Natural killer cell (primary cell): ENCODE measurements at regions of chr3 and their contacts with region 1.

Region 1: DNA sequence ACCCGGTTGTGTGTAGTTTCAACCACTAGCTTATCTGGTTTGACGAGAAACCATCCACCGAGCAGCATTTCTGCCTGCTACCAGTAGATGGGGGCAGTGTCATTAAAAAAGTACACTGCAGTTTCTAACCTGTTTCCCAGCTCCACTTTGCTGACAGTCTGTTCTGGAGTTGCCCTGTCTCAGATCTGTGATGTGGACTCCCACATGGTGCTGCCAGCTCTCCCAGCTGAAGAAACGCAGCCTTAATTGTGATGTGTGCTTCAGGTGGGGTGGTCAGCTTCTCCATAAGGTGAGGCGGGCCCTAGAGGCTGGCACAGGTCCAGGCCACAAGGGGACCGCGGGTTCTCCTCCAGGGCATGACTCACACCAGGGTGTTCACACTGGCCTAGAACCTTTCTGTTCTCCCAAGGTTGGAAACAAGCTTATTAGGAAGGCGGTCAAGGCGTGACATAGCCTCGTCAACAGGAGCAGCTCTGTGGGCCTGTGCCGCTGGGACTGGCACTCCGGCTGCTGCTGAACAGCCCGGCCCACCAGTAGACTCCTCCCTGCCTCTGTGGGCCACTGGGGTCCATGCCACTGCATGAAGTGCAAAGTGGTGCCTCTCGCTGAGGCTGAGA is 2.9 kb upstream of the FAM43A start:
- DNase-seq: peak; percentile 52 to 86
- ATAC-seq: peak; percentile 64 to 79 (median 64)
- H3K4me3 ChIP-seq: no peak overlapping the region
- H3K4me3 Mint-ChIP-seq: no peak overlapping the region
- H3K27ac ChIP-seq: no peak overlapping the region
- H3K27ac Mint-ChIP-seq: peak overlapping the region; percentile 57 to 73
- H3K4me1 ChIP-seq: peaks cover 29% of the 10 kb centered on the region
- H3K4me1 Mint-ChIP-seq: peaks cover 32 to 35% of the 10 kb centered on the region in 2 donors
- H3K27me3 ChIP-seq: no peaks in the 10 kb centered on the region
- H3K27me3 Mint-ChIP-seq: no peaks in the 10 kb centered on the region
- CTCF ChIP-seq: peak; percentile 77

Region 2: GRCh38 chr3:193928354-193929209 is 754.2 kb before region 1 on chr3:
- intact Hi-C with region 1: no loop called
- DNase-seq: no peak
- ATAC-seq: no peak
- H3K4me3 ChIP-seq: no peak overlapping the region
- H3K4me3 Mint-ChIP-seq: no peak overlapping the region
- H3K27ac ChIP-seq: no peak overlapping the region
- H3K27ac Mint-ChIP-seq: no peak overlapping the region
- H3K4me1 ChIP-seq: no peaks in the 10 kb centered on the region
- H3K4me1 Mint-ChIP-seq: peaks cover 0 to 4% of the 10 kb centered on the region in 2 donors
- H3K27me3 ChIP-seq: no peaks in the 10 kb centered on the region
- H3K27me3 Mint-ChIP-seq: peaks cover 11 to 16% of the 10 kb centered on the region in 2 donors
- CTCF ChIP-seq: no peak

Region 3: DNA sequence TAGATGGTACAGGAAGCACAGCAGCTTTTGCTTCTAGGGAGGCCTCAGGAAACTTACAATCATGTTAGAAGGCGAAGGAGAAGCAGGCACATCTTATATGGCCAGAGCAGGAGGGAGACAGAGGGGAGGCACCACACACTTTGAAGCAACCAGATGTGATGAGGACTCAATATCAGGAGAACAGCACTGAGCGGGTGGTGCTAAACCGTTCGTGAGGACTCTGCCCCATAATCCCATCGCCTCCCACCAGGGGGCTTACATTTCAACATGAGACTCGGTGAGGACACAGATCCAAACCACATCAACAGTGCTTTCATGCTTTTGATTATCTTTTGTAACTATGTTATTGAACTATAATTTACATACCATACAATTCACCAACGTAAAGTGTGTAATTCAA is 42.0 kb before region 1 on chr3:
- intact Hi-C with region 1: no loop called
- DNase-seq: peak in 1 of 2 donors; percentile 64
- ATAC-seq: peak; percentile 39 to 59 (median 40)
- H3K4me3 ChIP-seq: no peak overlapping the region
- H3K4me3 Mint-ChIP-seq: no peak overlapping the region
- H3K27ac ChIP-seq: no peak overlapping the region
- H3K27ac Mint-ChIP-seq: no peak overlapping the region
- H3K4me1 ChIP-seq: no peaks in the 10 kb centered on the region
- H3K4me1 Mint-ChIP-seq: peaks cover 0 to 4% of the 10 kb centered on the region in 2 donors
- H3K27me3 ChIP-seq: no peaks in the 10 kb centered on the region
- H3K27me3 Mint-ChIP-seq: no peaks in the 10 kb centered on the region
- CTCF ChIP-seq: no peak

Region 4: DNA sequence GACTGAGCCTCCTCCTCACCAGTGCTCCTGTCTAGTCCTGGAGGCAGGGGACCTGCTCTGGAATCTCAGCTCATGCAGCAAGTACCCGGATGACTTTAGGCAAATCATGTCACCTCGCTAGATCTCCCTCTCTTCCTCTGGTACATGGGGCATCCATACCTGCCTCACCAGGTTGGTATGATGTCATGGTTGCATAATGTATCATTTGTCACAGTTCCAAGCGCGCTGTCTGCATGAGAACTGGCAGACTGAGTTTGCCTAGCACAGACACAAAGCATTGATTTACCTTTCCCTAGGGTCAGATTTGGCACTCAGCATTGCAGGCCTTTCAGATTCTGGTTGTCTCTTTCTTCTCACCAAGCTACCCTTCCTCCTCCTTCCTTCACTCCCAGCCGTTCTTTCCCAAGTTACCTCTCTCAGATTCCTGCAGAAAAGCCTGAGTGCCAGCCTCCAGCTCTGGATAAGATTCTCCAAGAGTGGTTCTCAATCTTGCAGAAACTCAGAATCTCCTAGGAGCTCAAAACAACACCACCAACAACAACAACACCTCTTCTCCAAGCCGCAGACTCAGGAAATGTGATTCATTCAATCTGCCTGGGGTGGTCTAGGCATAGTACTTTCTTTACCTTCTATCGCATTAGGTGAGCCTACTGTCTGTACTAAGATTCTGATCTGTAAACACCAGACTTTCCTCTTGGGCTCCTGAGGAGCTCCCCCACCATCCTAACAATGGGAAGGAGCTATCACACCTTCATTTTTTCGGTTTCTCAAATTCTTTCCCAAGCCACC is 32.4 kb after region 1 on chr3:
- intact Hi-C with region 1: loop called (anchors 1 kb)
- DNase-seq: peak; percentile 37 to 56
- ATAC-seq: peak; percentile 88 to 98 (median 89)
- H3K4me3 ChIP-seq: no peak overlapping the region
- H3K4me3 Mint-ChIP-seq: peak overlapping the region; percentile 86
- H3K27ac ChIP-seq: peak overlapping the region; percentile 71
- H3K27ac Mint-ChIP-seq: peak overlapping the region; percentile 91 to 92
- H3K4me1 ChIP-seq: peaks cover 27% of the 10 kb centered on the region
- H3K4me1 Mint-ChIP-seq: peaks cover 24 to 29% of the 10 kb centered on the region in 2 donors
- H3K27me3 ChIP-seq: no peaks in the 10 kb centered on the region
- H3K27me3 Mint-ChIP-seq: no peaks in the 10 kb centered on the region
- CTCF ChIP-seq: no peak

Region 5: DNA sequence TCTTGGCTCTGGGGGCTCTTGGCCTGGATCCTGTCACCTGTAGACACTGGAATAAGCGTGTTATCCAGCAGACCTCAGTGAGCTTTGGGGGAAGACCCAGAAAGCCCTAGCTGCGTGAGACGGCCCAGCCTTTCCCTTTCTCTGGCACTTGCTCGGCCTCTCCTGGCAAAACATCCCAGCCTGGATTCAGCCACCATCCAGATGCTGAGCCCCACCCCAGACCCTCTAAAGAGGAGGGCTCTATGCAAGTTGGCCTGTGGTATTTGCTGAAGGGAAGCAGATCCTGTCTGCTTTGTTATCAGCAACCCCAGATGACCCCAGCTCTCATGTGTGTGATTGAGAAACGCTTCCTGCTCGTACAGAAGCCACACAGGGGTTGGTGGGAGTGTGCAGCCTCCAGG is 270.0 kb after region 1 on chr3:
- intact Hi-C with region 1: loop called (anchors 1 kb)
- DNase-seq: no peak
- ATAC-seq: no peak
- H3K4me3 ChIP-seq: no peak overlapping the region
- H3K4me3 Mint-ChIP-seq: no peak overlapping the region
- H3K27ac ChIP-seq: no peak overlapping the region
- H3K27ac Mint-ChIP-seq: no peak overlapping the region
- H3K4me1 ChIP-seq: no peaks in the 10 kb centered on the region
- H3K4me1 Mint-ChIP-seq: no peaks in the 10 kb centered on the region
- H3K27me3 ChIP-seq: no peaks in the 10 kb centered on the region
- H3K27me3 Mint-ChIP-seq: peaks cover 3 to 16% of the 10 kb centered on the region in 2 donors
- CTCF ChIP-seq: no peak

Region 6: DNA sequence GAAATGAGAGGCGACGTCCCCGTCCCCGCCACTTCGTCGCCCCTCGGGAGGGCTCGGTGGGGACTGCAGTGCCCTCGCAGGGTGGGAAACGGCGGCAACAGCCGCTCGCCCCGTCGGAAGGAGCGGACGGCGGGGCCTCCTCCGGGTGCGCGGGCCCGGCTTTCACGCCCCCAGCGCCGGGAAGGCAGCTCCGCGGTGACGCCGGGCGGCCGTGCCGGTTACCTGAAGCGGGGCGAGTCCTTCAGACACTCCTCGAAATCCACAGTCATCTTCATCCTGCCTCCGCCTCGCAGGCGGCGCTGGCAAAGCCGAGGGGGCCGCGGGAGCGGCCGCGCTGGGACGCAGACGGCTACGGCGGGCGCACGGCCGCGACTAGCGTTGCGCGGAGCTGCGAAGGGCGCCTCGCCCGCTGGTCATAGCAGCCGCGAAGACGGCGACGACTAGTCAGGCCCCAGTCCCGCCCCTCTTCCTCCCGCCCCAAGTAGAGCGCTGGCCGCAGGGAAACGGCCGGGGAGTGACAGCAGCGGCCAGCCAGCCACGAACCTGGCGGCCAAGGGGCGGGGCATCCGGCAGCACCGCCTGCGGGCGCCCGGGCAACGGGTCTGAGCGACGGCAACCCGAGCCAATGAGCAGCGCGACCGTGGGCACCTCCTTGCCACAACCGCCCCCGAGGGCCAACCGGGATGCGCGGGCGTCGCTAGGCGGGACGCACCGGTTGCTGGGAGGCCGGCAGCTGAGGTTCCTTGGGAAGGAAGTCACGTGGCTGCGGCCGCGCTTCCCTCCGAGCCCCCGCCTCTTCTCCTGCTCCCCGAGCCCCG is 760.0 kb after region 1 on chr3 and contains the start of gene ACAP2:
- intact Hi-C with region 1: loop called (anchors 5 kb)
- DNase-seq: peak; percentile 99
- ATAC-seq: peak; percentile 88 to 96 (median 91)
- H3K4me3 ChIP-seq: peak within 1 kb of the TSS; percentile 92
- H3K4me3 Mint-ChIP-seq: peak within 1 kb of the TSS; percentile 97
- H3K27ac ChIP-seq: peak within 1 kb of the TSS; percentile 89
- H3K27ac Mint-ChIP-seq: peak within 1 kb of the TSS; percentile 92 to 97
- H3K4me1 ChIP-seq: peaks cover 17% of the 10 kb centered on the region
- H3K4me1 Mint-ChIP-seq: peaks cover 37 to 41% of the 10 kb centered on the region in 2 donors
- H3K27me3 ChIP-seq: no peaks in the 10 kb centered on the region
- H3K27me3 Mint-ChIP-seq: no peaks in the 10 kb centered on the region
- CTCF ChIP-seq: no peak
- total RNA-seq, gene ACAP2: 103 to 132 (median 128) TPM